BJ (cell line): ENCODE measurements at regions of chr7 and their contacts with region 1.

Region 1: DNA sequence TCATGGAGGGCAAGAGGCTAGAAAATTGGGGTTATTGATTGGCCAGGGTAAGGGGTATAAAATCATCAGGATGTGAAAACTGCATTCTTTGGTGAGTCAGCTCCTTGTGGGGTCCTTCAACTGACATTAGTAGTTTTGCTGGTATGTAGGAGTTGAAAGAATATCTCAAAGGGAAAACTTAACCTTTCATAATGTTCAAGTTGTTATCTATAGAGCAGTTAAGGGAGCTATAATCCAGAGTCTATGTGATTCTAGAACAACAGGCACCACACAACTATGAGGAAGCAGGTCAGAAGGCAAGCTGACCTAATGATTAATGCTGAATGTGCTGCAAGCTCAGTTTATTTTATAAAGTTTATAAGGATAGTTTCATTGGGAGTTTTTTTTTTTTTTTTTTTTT is 13.7 kb downstream of the PRPS1L1 start:
- DNase-seq: no peak
- H3K4me3 ChIP-seq: no peak overlapping the region
- H3K27me3 ChIP-seq: no peaks in the 10 kb centered on the region
- CTCF ChIP-seq: no peak

Region 2: GRCh38 chr7:18053177-18053928 is 39.4 kb after region 1 on chr7:
- CTCF ChIA-PET with region 1: no interaction called
- POLR2A ChIA-PET with region 1: interaction called, 16 read pairs
- DNase-seq: no peak
- H3K4me3 ChIP-seq: no peak overlapping the region
- H3K27me3 ChIP-seq: no peaks in the 10 kb centered on the region
- CTCF ChIP-seq: no peak

Region 3: DNA sequence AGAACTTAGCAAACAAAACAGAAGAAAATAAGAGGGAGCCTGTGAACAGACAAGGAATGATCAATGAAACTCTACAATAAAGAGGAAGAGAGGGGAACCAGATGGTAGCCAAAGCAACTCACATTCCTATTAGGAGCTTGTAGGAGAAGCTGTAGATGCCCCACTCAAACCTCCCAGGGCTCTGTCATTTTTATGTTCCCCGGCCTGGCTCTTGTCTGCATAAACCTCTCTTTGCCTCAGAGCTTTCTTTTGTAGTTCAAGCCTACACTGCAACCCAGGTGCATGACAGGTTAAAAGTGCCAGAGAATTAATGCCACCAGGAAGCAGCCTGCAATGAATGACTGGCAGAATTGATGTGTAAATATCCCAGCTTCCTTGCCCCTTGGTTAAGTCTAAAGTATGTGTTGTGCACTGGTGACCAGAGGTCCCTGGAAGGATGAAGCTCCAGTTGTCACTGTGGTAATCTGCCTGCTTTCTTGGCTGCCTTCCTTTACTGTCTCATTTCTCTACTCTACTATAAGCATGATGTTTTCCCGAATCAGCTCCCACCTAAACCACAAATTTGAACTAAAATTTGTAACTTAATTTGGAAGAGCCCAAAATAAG is 522.0 kb after region 1 on chr7:
- CTCF ChIA-PET with region 1: no interaction called
- POLR2A ChIA-PET with region 1: interaction called, 10 read pairs
- DNase-seq: no peak
- H3K4me3 ChIP-seq: no peak overlapping the region
- H3K27me3 ChIP-seq: no peaks in the 10 kb centered on the region
- CTCF ChIP-seq: no peak